Mammary epithelial cell (primary cell): ENCODE measurements at regions of chr11 and their contacts with region 1.

Region 1: DNA sequence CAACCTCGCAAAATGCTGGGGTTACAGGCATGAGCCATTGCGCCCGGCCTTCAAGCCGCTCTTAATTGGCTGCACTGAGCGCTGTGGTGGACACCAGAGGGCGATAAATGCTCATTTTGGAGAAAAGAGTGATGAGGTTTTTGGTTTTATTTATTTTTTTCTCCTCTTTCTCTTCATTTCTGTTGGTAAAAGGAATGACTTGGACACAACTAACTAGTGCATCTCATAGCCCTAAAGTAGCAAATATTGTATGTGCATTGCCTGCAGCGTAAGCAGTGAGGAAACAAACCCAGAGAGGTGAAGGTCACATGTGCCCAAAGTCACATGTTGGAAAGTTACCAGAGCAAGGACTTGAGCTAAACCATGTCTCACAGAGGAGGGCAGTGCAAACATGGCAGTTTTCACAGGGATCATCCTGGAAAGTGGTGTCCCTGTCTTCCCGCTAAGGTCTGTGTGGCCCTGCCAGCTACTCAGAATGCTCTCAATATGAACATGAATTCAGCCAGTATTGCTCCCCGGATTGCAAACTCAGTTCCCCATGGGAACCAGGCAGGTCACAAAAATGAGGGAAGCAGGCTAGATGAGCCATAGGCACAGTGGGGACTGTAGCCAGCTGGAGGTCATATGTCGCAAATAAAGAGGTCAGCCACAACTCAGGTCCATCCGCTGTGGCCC is 8.6 kb upstream of the CD82 start:
- DNase-seq: no peak
- H3K4me3 ChIP-seq: no peak overlapping the region
- H3K27ac ChIP-seq: no peak overlapping the region
- H3K4me1 ChIP-seq: peaks cover 27% of the 10 kb centered on the region
- H3K27me3 ChIP-seq: no peaks in the 10 kb centered on the region
- CTCF ChIP-seq: peak; percentile 68 to 72

Region 2: GRCh38 chr11:44638032-44638431 is 81.2 kb after region 1 on chr11:
- CTCF ChIA-PET with region 1: interaction called, 23 read pairs
- dilution Hi-C with region 1: no loop called
- in situ Hi-C with region 1: no loop called
- intact Hi-C with region 1: no loop called
- DNase-seq: peak; percentile 20
- H3K4me3 ChIP-seq: no peak overlapping the region
- H3K27ac ChIP-seq: no peak overlapping the region
- H3K4me1 ChIP-seq: peaks cover 16% of the 10 kb centered on the region
- H3K27me3 ChIP-seq: no peaks in the 10 kb centered on the region
- CTCF ChIP-seq: no peak

Region 3: DNA sequence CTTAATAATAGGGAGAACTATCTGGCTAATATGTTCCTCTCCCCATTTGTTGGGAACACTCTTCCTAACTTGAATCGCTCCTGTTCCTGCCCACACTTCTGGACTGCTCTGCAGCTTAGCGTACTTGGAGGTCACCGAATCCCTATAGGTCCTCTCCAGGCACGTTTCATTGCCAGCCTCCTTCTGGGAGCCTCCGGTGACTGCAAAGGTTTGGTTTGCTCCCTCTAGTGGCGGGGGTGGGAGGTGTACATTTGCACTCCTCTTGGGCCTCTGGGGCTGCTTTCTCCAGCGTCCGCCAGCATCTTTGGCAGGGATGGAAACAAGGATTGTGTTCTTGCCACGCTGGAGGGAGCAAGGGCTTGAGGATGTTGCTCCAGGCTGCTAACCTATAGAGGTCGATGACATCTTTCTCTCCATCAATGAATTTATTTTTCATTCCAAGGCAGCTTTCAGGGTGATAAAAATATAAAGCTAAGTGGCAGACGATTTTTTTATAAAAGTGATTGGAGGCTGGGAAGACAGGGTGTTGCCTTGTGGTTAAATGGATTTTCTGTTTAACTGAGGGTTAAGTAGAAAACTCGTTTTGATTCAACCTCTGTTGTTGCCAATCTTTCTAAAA is 218.6 kb after region 1 on chr11:
- CTCF ChIA-PET with region 1: no interaction called
- dilution Hi-C with region 1: no loop called
- in situ Hi-C with region 1: no loop called
- intact Hi-C with region 1: loop called (anchors 1 kb)
- DNase-seq: peak; percentile 32
- H3K4me3 ChIP-seq: no peak overlapping the region
- H3K27ac ChIP-seq: no peak overlapping the region
- H3K4me1 ChIP-seq: no peaks in the 10 kb centered on the region
- H3K27me3 ChIP-seq: peaks cover 4% of the 10 kb centered on the region
- CTCF ChIP-seq: peak; percentile 82 to 85

Region 4: DNA sequence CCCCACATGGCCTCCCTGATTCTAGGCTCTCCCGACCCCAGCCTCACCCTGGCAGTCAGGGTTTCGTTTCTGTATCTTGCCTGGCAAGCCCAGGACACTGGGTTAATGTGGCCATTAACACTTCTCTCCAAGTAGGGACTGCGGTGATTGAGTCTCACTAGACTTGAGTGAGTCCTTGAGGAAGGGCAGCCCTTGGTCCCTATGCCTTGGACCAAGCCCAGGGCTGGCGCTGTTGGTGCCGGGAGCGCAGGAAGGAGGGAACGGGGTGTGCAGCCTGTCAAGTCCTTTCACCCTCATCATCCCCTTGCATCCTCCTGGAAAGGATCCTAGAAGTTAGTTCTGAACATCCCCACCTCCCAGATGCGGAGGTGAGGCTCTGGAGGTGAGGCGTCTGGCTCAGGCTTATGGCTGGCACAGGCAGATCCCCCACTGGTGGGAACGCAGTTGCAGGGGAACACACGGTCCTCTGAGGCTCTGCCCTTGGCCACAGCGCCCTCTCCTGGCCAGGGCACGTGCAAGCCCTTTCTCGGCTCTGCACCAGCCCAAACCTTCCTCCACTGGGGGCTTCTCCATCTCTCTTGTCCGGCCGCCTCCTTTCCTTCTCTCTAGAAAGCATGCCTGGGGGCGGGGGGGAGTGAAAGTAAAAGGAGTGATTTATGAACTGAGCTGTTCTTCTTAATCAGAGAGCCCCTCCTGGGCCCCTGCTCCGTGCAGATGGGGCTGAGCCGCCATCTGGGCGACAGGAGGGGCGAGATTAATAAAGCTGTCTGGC is 337.2 kb after region 1 on chr11:
- CTCF ChIA-PET with region 1: no interaction called
- dilution Hi-C with region 1: no loop called
- in situ Hi-C with region 1: no loop called
- intact Hi-C with region 1: loop called (anchors 2 kb)
- DNase-seq: peak; percentile 16
- H3K4me3 ChIP-seq: no peak overlapping the region
- H3K27ac ChIP-seq: no peak overlapping the region
- H3K4me1 ChIP-seq: no peaks in the 10 kb centered on the region
- H3K27me3 ChIP-seq: peaks cover 2% of the 10 kb centered on the region
- CTCF ChIP-seq: peak; percentile 75 to 92

Region 5: DNA sequence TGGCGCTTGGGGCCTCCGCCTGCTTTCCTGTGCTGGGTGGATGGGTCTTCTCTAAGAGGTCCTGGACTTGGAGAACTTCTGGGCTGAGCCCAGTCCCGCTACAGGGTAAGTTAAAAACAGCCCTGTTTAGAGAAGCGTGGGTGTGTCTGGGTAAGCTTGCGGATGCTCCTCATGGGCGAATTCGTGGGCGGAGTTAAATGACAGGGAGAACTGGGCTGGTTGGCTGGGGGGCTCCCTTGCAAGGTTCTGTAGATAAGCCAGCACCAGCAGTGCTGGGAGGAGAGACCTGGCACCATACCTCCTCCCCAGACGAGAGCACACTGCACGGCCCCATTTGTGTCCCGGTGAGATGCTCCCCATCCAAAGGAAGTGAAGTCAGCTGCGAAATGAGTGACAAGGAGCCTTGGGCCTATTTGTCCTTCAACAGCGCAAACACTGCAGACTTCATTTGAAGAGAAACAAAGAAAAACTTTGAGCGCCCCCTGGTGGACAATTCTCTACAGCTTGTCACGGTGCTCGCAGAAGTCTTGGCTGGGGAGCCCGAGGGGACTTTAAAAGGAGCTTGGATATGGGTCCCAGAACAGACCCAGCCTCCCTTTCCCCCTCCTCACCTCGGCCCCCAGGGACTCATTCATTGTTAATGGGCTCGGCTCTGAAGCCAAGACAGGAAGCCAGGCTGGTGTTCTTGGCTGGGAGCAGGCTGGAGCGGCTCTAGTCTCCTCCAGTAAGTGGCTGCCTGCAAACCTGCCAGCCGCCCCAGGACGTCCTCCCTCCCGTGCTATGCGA is 354.4 kb after region 1 on chr11:
- CTCF ChIA-PET with region 1: no interaction called
- dilution Hi-C with region 1: no loop called
- in situ Hi-C with region 1: loop called in 1 of 2 experiments (anchors 10 kb)
- intact Hi-C with region 1: loop called (anchors 2 kb)
- DNase-seq: peak; percentile 51
- H3K4me3 ChIP-seq: no peak overlapping the region
- H3K27ac ChIP-seq: no peak overlapping the region
- H3K4me1 ChIP-seq: no peaks in the 10 kb centered on the region
- H3K27me3 ChIP-seq: no peaks in the 10 kb centered on the region
- CTCF ChIP-seq: peak; percentile 75 to 78